ENCODE measurements at regions of chr11 and their contacts with region 1.

Region 1: GRCh38 chr11:61871158-61871597 is 20.2 kb downstream of the FADS3 start:
- DNase-seq: no peak
- H3K4me3 ChIP-seq: no peak overlapping the region
- H3K27me3 ChIP-seq: no peaks in the 10 kb centered on the region
- CTCF ChIP-seq: peak; percentile 97

Region 2: DNA sequence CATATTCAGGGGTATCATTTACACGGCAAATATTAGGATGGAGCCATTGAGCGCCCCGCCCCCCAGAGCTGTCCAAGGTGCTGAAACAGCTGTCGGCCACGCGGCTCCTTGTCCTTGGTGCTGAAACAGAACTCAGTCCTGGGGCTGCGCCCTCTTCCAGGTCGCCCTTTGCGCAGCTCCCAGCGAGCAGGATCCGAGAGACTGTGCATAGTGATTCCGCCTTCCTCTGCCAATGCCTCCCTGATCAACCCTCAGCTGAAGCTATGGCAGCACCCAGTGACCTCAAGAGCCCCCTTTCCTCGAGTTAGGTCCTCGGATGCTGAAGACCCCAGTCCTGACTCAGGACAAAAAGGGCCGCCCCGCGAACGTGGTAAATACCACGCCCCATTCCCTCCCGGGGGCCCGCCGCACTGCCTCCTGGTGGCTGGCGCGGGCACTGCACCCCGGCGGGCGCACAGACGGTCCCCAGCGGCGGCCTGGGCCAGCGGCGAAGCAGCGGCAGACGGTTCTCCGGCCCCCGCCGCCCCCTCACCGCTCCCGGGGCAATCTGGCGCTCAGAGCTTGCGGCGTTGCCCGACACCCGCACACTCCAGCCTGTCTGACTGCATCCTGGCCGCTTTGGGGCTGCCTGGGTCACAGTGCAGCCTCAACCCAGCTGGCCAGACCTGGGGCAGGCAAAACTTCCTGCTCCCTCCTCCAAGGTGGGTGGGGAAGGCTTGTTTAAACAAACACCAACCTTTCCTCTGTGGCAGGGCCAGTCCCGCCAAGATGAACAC is 303.7 kb before region 1 on chr11:
- CTCF ChIA-PET with region 1: no interaction called
- POLR2A ChIA-PET with region 1: no interaction called
- DNase-seq: no peak
- H3K4me3 ChIP-seq: no peak overlapping the region
- H3K27me3 ChIP-seq: peaks cover 6% of the 10 kb centered on the region; the same call in 1 of the 2 replicates
- CTCF ChIP-seq: peak; percentile 23; the same call in 1 of the 2 replicates

Region 3: GRCh38 chr11:61846362-61847020 is 24.7 kb before region 1 on chr11:
- CTCF ChIA-PET with region 1: interaction called, 10 read pairs
- POLR2A ChIA-PET with region 1: no interaction called
- DNase-seq: no peak
- H3K4me3 ChIP-seq: no peak overlapping the region
- H3K27me3 ChIP-seq: no peaks in the 10 kb centered on the region
- CTCF ChIP-seq: no peak

Region 4: GRCh38 chr11:61881397-61881796 is 10.2 kb after region 1 on chr11:
- CTCF ChIA-PET with region 1: interaction called, 35 read pairs
- POLR2A ChIA-PET with region 1: no interaction called
- DNase-seq: no peak
- H3K4me3 ChIP-seq: no peak overlapping the region
- H3K27me3 ChIP-seq: no peaks in the 10 kb centered on the region
- CTCF ChIP-seq: no peak

Region 5: DNA sequence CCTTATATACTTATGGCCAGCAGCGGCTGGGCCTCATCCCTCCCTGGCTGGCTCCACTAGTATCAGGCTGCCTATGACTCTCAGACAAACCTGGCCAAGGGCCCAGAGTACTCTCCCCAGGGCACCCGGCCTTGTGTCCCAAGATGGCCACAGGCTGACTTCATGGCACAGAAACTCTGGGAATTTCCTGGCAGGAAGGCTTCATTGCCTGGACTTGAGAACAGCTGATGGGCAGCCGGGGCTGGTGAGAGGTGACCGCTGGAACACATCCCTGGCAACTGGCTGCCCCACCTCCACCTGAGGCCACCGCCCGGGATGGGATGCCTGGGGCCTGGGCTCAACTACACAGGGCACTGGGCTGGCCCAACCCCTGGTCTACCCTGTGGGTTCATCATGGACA is 16.9 kb after region 1 on chr11:
- CTCF ChIA-PET with region 1: interaction called, 16 read pairs
- POLR2A ChIA-PET with region 1: no interaction called
- DNase-seq: peak; percentile 72
- H3K4me3 ChIP-seq: no peak overlapping the region
- H3K27me3 ChIP-seq: no peaks in the 10 kb centered on the region
- CTCF ChIP-seq: no peak

Region 6: GRCh38 chr11:62108017-62108750 is 237.0 kb after region 1 on chr11:
- CTCF ChIA-PET with region 1: interaction called, 41 read pairs
- POLR2A ChIA-PET with region 1: no interaction called
- DNase-seq: no peak
- H3K4me3 ChIP-seq: no peak overlapping the region
- H3K27me3 ChIP-seq: no peaks in the 10 kb centered on the region
- CTCF ChIP-seq: peak; percentile 72

Measured in BJ (cell line).